Mammary epithelial cell (primary cell): ENCODE measurements at regions of chr10 and their contacts with region 1.

Region 1: GRCh38 chr10:49407552-49408137 is 11.8 kb upstream of the DRGX start:
- DNase-seq: peak; percentile 60
- H3K4me3 ChIP-seq: no peak overlapping the region
- H3K27ac ChIP-seq: no peak overlapping the region
- H3K4me1 ChIP-seq: no peaks in the 10 kb centered on the region
- H3K27me3 ChIP-seq: no peaks in the 10 kb centered on the region
- CTCF ChIP-seq: peak; percentile 97

Region 2: DNA sequence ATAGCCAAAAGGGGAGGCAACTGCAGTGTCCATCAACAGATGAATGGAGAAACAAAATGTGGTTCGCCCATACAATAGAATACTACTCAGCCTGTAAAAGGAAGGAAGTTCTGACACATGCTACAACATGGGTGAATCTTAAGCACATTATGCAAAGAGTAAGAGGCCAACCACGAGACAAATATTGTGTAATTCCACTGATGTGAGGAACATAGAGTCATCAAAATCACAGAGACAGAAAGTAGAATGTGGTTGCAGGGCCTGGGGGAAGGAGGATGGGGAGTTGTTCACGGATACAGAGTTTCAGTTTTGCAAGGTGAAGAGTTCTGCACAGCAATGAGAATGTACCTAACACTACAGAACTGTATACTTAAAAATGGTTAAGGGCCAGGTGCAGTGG is 122.4 kb before region 1 on chr10:
- CTCF ChIA-PET with region 1: no interaction called
- dilution Hi-C with region 1: no loop called
- in situ Hi-C with region 1: no loop called
- intact Hi-C with region 1: no loop called
- DNase-seq: peak; percentile 34
- H3K4me3 ChIP-seq: no peak overlapping the region
- H3K27ac ChIP-seq: no peak overlapping the region
- H3K4me1 ChIP-seq: no peaks in the 10 kb centered on the region
- H3K27me3 ChIP-seq: peaks cover 3% of the 10 kb centered on the region
- CTCF ChIP-seq: no peak

Region 3: DNA sequence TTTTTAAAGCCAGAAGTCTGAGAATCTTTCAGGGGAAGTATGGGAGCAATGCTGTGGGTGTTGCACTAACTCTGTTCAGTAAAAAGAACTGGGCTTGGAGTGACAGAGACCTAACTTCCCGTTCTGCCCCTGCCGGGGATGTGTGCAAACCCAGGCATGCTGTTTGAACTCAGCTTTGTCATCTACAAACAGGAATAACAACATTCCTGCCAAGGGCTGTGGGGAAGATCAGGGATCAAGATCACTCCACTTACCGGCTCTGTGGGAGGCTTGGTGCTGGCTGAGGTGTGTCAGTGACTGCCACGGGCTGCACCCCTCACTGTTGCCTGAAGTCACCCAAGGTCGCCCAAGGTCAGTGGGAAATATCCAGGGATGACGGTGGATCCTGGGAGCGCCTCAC is 11.4 kb after region 1 on chr10:
- CTCF ChIA-PET with region 1: no interaction called
- dilution Hi-C with region 1: no loop called
- in situ Hi-C with region 1: no loop called
- intact Hi-C with region 1: loop called (anchors 1 kb)
- DNase-seq: peak; percentile 86
- H3K4me3 ChIP-seq: no peak overlapping the region
- H3K27ac ChIP-seq: peak overlapping the region; percentile 39
- H3K4me1 ChIP-seq: peaks cover 16% of the 10 kb centered on the region
- H3K27me3 ChIP-seq: no peaks in the 10 kb centered on the region
- CTCF ChIP-seq: peak in 1 of 2 donors; percentile 32

Region 4: GRCh38 chr10:49446031-49446430 is 38.4 kb after region 1 on chr10:
- CTCF ChIA-PET with region 1: no interaction called
- dilution Hi-C with region 1: no loop called
- in situ Hi-C with region 1: no loop called
- intact Hi-C with region 1: loop called (anchors 5 kb)
- DNase-seq: peak; percentile 47
- H3K4me3 ChIP-seq: no peak overlapping the region
- H3K27ac ChIP-seq: no peak overlapping the region
- H3K4me1 ChIP-seq: no peaks in the 10 kb centered on the region
- H3K27me3 ChIP-seq: no peaks in the 10 kb centered on the region
- CTCF ChIP-seq: no peak

Region 5: GRCh38 chr10:49474901-49475300 is 67.3 kb after region 1 on chr10:
- CTCF ChIA-PET with region 1: no interaction called
- dilution Hi-C with region 1: no loop called
- in situ Hi-C with region 1: no loop called
- intact Hi-C with region 1: loop called (anchors 5 kb)
- DNase-seq: peak; percentile 23
- H3K4me3 ChIP-seq: no peak overlapping the region
- H3K27ac ChIP-seq: no peak overlapping the region
- H3K4me1 ChIP-seq: no peaks in the 10 kb centered on the region
- H3K27me3 ChIP-seq: no peaks in the 10 kb centered on the region
- CTCF ChIP-seq: no peak

Region 6: DNA sequence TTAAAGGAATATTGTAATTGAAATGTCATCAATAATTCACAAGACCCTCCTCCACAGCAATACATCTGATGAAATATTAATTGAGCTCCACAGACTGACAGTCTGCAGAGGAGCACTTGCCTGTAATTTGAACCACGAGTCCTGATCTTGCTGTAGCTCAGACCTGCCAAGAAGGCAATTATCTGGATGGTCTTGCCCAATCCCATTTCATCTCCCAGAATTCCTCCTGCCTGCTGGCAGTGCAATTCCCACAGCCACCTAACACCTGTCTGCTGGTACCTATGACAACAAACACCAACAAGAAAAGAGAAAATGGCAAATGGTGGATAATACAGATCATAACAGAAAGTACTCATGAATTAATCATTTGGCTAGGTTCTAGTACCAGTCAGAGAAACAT is 92.8 kb after region 1 on chr10:
- CTCF ChIA-PET with region 1: no interaction called
- dilution Hi-C with region 1: no loop called
- in situ Hi-C with region 1: no loop called
- intact Hi-C with region 1: no loop called
- DNase-seq: no peak
- H3K4me3 ChIP-seq: no peak overlapping the region
- H3K27ac ChIP-seq: no peak overlapping the region
- H3K4me1 ChIP-seq: no peaks in the 10 kb centered on the region
- H3K27me3 ChIP-seq: no peaks in the 10 kb centered on the region
- CTCF ChIP-seq: no peak

Region 7: GRCh38 chr10:49512121-49512809 is 104.6 kb after region 1 on chr10:
- CTCF ChIA-PET with region 1: no interaction called
- dilution Hi-C with region 1: no loop called
- in situ Hi-C with region 1: no loop called
- intact Hi-C with region 1: loop called (anchors 1 kb)
- DNase-seq: peak; percentile 7
- H3K4me3 ChIP-seq: no peak overlapping the region
- H3K27ac ChIP-seq: no peak overlapping the region
- H3K4me1 ChIP-seq: no peaks in the 10 kb centered on the region
- H3K27me3 ChIP-seq: no peaks in the 10 kb centered on the region
- CTCF ChIP-seq: peak; percentile 53 to 65

Region 8: DNA sequence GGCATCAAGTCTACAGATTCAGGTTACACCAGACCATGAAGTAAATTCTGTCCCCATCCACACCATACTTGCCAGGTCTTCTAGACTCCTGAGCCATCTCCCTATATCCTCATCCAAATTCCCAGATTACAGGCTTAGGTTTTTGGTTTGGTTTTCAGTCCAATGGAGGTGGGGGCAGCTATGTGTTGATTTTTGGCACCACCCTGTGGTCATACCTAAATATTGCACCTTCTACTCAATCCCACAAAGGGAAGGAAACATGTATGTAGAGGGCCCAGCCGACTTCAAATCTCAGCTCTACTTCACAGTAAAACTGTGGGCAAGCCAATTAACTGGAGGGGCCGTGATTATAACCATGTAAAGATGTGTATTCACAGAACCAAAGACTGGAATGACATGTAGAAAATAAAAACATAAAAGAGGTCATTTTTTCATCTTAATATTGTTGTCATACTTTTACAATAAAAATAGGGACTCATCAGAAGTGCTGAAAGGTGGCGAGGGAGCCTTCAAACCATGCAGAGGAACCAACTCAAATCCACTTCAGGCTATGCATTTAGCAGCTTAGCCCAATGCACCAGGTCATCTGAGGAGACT is 111.4 kb after region 1 on chr10:
- CTCF ChIA-PET with region 1: interaction called, 3 read pairs
- dilution Hi-C with region 1: loop called (anchors 5 kb)
- in situ Hi-C with region 1: no loop called
- intact Hi-C with region 1: loop called (anchors 1 kb)
- DNase-seq: peak; percentile 26
- H3K4me3 ChIP-seq: no peak overlapping the region
- H3K27ac ChIP-seq: no peak overlapping the region
- H3K4me1 ChIP-seq: no peaks in the 10 kb centered on the region
- H3K27me3 ChIP-seq: no peaks in the 10 kb centered on the region
- CTCF ChIP-seq: peak; percentile 63 to 68

Region 9: DNA sequence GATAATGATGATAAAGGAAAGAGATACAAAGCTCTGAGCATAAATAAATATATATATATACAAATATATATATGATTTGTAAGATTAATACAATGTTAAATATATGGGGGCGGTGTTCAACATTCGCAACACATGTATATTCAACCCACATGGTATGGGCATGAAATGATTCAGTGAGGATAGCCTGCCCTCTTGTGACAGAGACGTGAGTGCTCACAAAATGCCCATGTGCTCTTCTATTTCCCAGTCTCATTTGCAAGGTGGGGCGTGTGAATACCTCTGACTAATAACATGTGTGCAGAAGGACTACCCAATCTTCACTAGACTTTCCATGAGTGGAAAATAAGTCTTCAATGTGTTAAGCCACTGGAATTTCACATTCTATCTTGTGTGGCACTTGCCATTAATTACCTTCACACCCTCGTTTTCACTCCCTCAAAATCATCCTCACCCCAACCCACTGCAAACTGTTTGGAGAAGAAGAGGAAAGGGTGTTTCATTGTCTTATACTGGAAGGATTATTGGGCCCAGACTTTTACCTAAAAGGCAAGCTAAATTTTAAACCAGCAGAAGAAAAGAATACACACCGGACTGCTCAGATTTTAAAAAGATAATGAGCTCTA is 816.8 kb after region 1 on chr10:
- CTCF ChIA-PET with region 1: no interaction called
- dilution Hi-C with region 1: no loop called
- in situ Hi-C with region 1: no loop called
- intact Hi-C with region 1: loop called (anchors 5 kb)
- DNase-seq: peak; percentile 74
- H3K4me3 ChIP-seq: no peak overlapping the region
- H3K27ac ChIP-seq: no peak overlapping the region
- H3K4me1 ChIP-seq: peaks cover 4% of the 10 kb centered on the region
- H3K27me3 ChIP-seq: no peaks in the 10 kb centered on the region
- CTCF ChIP-seq: peak; percentile 65 to 79